Pancreas (tissue), 10 donors: ENCODE measurements at regions of chr2 and their contacts with region 1.

Region 1: DNA sequence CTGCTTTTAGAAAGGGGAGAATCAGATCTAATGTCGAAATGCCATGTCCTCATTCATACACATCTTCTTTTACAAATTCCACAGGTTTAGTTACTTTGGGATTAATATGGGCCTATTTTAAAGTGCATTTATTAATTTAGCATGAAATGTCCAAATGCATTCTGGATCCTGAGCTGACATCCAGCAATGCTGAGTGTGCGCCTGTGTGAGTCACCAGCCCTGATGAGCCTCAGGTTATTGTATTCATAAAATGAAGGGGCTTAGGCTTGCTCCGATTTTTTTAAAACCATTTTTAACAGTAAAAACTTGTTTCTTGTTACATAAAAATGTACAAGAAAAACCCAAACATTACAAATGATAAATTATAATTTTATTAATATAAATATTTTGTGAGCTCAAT is 94.1 kb downstream of the SH3YL1 start:
- DNase-seq: no peak
- ATAC-seq: no peak
- H3K4me3 ChIP-seq: no peak overlapping the region
- H3K27ac ChIP-seq: no peak overlapping the region
- H3K4me1 ChIP-seq: peaks cover 0 to 12% (median 5%) of the 10 kb centered on the region in 3 donors
- H3K27me3 ChIP-seq: no peaks in the 10 kb centered on the region
- CTCF ChIP-seq: no peak

Region 2: DNA sequence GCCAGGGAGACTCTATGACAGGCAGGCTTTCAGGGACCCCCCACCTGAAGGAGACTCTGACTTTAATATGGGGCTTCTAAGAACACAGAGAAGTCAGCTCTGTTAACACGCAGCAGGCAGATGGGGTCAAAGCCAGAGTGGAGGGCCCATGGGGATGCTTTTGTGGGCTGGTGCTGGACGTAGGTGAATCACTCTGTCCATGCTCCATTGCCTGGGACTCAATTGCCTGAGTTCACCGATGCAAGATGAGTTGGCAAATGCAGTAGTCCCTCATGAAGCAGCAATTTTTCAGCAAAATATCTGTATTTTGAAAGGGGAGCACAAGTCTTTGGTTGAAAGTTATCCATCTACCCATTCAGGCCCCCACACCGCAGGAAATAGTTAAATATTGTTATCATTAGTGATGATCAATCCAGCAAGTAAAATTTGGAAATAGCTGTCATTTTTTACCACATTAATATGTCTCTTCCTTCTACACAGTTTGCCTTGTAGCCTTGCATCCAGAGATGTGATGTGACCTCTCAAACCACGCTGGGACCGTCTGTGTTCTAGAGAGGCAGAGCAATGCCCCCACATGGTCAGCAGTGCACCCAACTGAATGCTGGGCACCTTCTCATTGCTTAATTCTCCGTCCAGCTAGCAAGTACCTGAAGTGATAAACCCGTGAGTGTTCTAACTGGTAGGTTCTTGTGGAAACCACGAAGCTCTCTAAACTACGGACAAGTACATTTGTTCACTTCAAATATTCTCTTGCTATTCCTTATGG is 88.6 kb before region 1 on chr2:
- intact Hi-C with region 1: no loop called
- DNase-seq: peak in 2 of 6 donors; percentile 23 to 24
- ATAC-seq: peak; percentile 46 to 95 (median 77)
- H3K4me3 ChIP-seq: no peak overlapping the region
- H3K27ac ChIP-seq: no peak overlapping the region
- H3K4me1 ChIP-seq: no peaks in the 10 kb centered on the region
- H3K27me3 ChIP-seq: no peaks in the 10 kb centered on the region
- CTCF ChIP-seq: no peak

Region 3: DNA sequence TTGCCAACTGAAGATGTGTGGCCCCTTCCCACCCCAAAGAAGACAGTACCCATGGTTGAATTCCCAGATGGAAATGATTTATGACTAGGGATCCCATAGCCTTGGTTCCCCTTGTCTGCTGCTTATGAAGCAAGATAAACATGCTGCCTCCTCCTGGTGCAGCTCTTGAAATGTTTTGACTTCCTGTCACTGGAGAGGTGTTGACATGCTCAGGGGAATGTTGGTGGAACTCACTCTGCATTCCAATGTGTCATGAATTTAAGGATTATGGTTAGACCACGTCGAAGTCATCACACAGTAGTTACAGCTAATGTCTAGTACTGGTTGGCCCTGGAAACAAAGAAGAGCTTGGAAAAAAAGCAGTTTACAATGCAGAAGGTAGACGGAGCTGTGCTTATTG is 54.4 kb before region 1 on chr2:
- intact Hi-C with region 1: no loop called
- DNase-seq: no peak
- ATAC-seq: peak in 3 of 4 donors; percentile 29 to 39 (median 30)
- H3K4me3 ChIP-seq: no peak overlapping the region
- H3K27ac ChIP-seq: no peak overlapping the region
- H3K4me1 ChIP-seq: peaks cover 0 to 7% (median 2%) of the 10 kb centered on the region in 3 donors
- H3K27me3 ChIP-seq: no peaks in the 10 kb centered on the region
- CTCF ChIP-seq: no peak

Region 4: DNA sequence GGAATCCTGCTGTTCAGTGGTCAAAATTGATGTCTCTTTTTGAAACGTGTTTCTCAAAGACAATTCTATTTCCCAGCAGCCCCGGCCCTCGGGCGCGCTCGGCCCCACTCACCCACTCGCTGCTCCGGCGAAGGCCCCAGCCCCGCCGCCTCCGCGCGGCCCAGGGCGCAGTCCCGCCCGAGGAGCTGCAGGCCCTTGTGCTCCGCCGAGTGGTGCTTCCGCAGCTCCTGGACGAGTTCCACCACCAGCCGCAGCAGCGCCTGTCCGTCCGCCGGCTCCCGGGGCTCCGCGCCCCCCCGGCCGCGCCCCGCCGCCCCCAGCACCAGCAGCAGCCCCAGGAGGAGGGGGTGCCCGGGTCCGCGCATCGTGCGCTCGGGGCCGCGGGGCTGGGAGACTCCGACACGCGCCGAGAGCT is 117.7 kb after region 1 on chr2:
- intact Hi-C with region 1: loop called in 1 of 3 experiments (anchors 5 kb)
- DNase-seq: peak in 2 of 6 donors; percentile 34 to 54
- ATAC-seq: peak in 3 of 4 donors; percentile 14 to 35 (median 29)
- H3K4me3 ChIP-seq: peak overlapping the region; percentile 24 to 60 (median 46)
- H3K27ac ChIP-seq: peak overlapping the region; percentile 75 to 91 (median 87)
- H3K4me1 ChIP-seq: peaks cover 0 to 8% (median 0%) of the 10 kb centered on the region in 3 donors
- H3K27me3 ChIP-seq: no peaks in the 10 kb centered on the region
- CTCF ChIP-seq: no peak